Gastrocnemius medialis (tissue), 4 donors: ENCODE measurements at regions of chr21 and their contacts with region 1.

Region 1: GRCh38 chr21:36260030-36260787 is 59.8 kb upstream of the MORC3 start:
- DNase-seq: no peak
- ATAC-seq: peak; percentile 65 to 85
- H3K4me3 ChIP-seq: peak overlapping the region; percentile 47 to 74 (median 55)
- H3K27ac ChIP-seq: peak overlapping the region; percentile 64 to 77 (median 72)
- H3K4me1 ChIP-seq: peaks cover 4 to 8% of the 10 kb centered on the region in 2 donors
- H3K27me3 ChIP-seq: no peaks in the 10 kb centered on the region
- CTCF ChIP-seq: peak in 4 of 5 experiments; percentile 56 to 76 (median 66)
- POLR2A ChIP-seq: no peak

Region 2: GRCh38 chr21:36218691-36219090 is 41.5 kb before region 1 on chr21:
- in situ Hi-C with region 1: no loop called
- intact Hi-C with region 1: no loop called
- DNase-seq: no peak
- ATAC-seq: no peak
- H3K4me3 ChIP-seq: no peak overlapping the region
- H3K27ac ChIP-seq: no peak overlapping the region
- H3K4me1 ChIP-seq: no peaks in the 10 kb centered on the region
- H3K27me3 ChIP-seq: no peaks in the 10 kb centered on the region
- CTCF ChIP-seq: no peak
- POLR2A ChIP-seq: no peak

Region 3: GRCh38 chr21:36330904-36331303 is 70.7 kb after region 1 on chr21:
- in situ Hi-C with region 1: no loop called
- intact Hi-C with region 1: loop called (anchors 5 kb)
- DNase-seq: no peak
- ATAC-seq: peak; percentile 69 to 85
- H3K4me3 ChIP-seq: no peak overlapping the region
- H3K27ac ChIP-seq: peak overlapping the region in 2 of 4 donors; percentile 42 to 56
- H3K4me1 ChIP-seq: peaks cover 45 to 54% of the 10 kb centered on the region in 2 donors
- H3K27me3 ChIP-seq: no peaks in the 10 kb centered on the region
- CTCF ChIP-seq: peak; percentile 41 to 76 (median 65)
- POLR2A ChIP-seq: no peak